ENCODE measurements at regions of chr11 and their contacts with region 1.

Region 1: GRCh38 chr11:81787584-81788049 is 946.0 kb downstream of the FAM181B start:
- DNase-seq: no peak
- H3K4me3 Mint-ChIP-seq: no peak overlapping the region
- H3K27ac Mint-ChIP-seq: peak overlapping the region; percentile 10
- H3K4me1 Mint-ChIP-seq: peaks cover 8% of the 10 kb centered on the region
- H3K27me3 Mint-ChIP-seq: no peaks in the 10 kb centered on the region

Region 2: GRCh38 chr11:81869351-81870065 is 81.9 kb after region 1 on chr11:
- intact Hi-C with region 1: loop called (anchors 1 kb)
- DNase-seq: peak; percentile 87
- H3K4me3 Mint-ChIP-seq: peak overlapping the region; percentile 72
- H3K27ac Mint-ChIP-seq: peak overlapping the region; percentile 80
- H3K4me1 Mint-ChIP-seq: peaks cover 39% of the 10 kb centered on the region
- H3K27me3 Mint-ChIP-seq: peaks cover 7% of the 10 kb centered on the region

Region 3: DNA sequence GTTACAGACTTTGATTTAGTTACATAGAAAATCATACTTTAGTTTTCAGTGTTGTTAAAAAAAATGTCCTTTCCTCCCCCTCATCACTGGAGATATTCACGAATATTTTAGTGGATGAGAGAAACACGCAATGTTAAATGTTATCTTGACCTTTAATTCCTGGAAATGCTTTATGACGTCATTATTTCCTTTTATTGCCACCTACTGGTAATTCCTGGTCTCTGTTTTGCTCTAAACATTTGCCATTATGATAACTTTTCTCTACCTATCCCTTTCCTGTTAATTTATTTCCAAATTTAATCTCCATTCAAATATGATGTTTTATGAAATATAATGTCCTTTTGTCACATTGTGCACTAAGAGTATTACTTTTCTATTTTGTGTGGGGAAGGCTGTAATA is 175.4 kb after region 1 on chr11:
- intact Hi-C with region 1: loop called (anchors 2 kb)
- DNase-seq: no peak
- H3K4me3 Mint-ChIP-seq: no peak overlapping the region
- H3K27ac Mint-ChIP-seq: no peak overlapping the region
- H3K4me1 Mint-ChIP-seq: peaks cover 12% of the 10 kb centered on the region
- H3K27me3 Mint-ChIP-seq: no peaks in the 10 kb centered on the region

Region 4: GRCh38 chr11:82004537-82005213 is 217.1 kb after region 1 on chr11:
- intact Hi-C with region 1: loop called (anchors 1 kb)
- DNase-seq: no peak
- H3K4me3 Mint-ChIP-seq: no peak overlapping the region
- H3K27ac Mint-ChIP-seq: no peak overlapping the region
- H3K4me1 Mint-ChIP-seq: peaks cover 9% of the 10 kb centered on the region
- H3K27me3 Mint-ChIP-seq: peaks cover 2% of the 10 kb centered on the region

Region 5: GRCh38 chr11:82229341-82229740 is 441.7 kb after region 1 on chr11:
- intact Hi-C with region 1: loop called (anchors 1 kb)
- DNase-seq: no peak
- H3K4me3 Mint-ChIP-seq: no peak overlapping the region
- H3K27ac Mint-ChIP-seq: no peak overlapping the region
- H3K4me1 Mint-ChIP-seq: no peaks in the 10 kb centered on the region
- H3K27me3 Mint-ChIP-seq: no peaks in the 10 kb centered on the region